ENCODE measurements at regions of chr13 and their contacts with region 1.

Region 1: DNA sequence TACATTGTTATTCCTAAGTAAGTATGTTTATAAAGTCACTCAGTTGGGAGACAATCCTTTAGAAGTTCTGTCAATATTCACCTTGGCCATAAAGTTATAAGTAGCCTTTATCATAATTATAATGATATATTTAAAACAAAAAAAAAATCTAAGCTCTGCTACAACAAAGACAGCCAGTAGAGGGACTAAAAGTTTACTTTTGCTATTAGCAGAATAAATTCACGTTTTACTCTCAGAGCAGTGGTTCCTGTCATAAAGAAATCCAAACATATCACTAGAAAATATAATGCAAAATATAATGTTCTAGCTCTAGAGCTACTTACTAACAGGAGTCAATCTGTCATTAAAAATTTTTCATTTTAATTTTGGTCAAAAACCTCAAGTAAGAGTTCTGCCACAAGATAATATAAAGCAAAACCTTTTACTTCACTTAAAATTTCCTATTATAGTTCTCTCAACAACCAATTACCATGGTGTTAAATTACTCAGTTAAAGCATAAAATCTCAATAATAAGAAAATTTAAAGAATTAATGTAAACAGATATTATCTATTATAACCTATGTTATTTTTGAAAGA is 17.7 kb downstream of the INTS6 start:
- DNase-seq: no peak
- H3K4me3 ChIP-seq: no peak overlapping the region
- H3K27ac ChIP-seq: no peak overlapping the region
- H3K27me3 ChIP-seq: no peaks in the 10 kb centered on the region
- CTCF ChIP-seq: peak; percentile 68

Region 2: GRCh38 chr13:51311957-51312520 is 123.1 kb before region 1 on chr13:
- CTCF ChIA-PET with region 1: no interaction called
- POLR2A ChIA-PET with region 1: no interaction called
- DNase-seq: no peak
- H3K4me3 ChIP-seq: no peak overlapping the region
- H3K27ac ChIP-seq: no peak overlapping the region
- H3K27me3 ChIP-seq: peaks cover 3% of the 10 kb centered on the region
- CTCF ChIP-seq: no peak

Region 3: GRCh38 chr13:51420681-51421490 is 14.2 kb before region 1 on chr13:
- CTCF ChIA-PET with region 1: interaction called, 12 read pairs
- POLR2A ChIA-PET with region 1: no interaction called
- DNase-seq: no peak
- H3K4me3 ChIP-seq: no peak overlapping the region
- H3K27ac ChIP-seq: no peak overlapping the region
- H3K27me3 ChIP-seq: no peaks in the 10 kb centered on the region
- CTCF ChIP-seq: no peak

Region 4: DNA sequence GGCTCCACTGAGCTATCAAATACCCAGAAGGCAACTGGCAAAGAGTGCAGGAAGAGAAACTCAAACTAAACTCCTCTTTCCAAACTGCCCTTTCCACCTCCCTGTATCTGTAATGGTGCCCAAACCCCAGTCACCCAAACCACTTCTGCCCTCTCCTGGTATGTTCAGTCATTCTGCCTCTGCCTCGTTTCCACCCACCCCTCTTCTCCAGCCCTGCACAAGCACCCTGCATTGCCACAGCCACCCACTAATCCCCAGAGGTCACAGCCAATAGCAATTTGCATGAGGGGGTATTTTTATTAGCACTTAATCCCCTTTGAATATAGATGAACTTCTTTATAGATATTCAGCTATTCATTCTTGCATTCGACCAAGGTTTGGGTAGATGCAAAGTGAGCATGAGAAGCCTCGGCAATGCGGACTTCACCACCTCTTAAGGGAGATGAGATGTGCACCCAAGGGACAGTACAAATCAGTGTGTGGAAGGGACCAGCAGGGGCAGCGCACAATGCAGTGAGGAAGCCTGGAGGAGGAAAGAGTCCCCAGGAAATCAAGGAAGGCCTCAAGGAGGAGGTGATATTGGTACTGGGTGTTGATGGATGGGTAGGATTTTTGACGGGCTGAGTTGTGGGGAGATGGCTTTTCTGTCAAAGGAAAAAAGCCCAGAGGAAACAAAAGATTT is 397.5 kb after region 1 on chr13:
- CTCF ChIA-PET with region 1: interaction called, 16 read pairs
- POLR2A ChIA-PET with region 1: no interaction called
- DNase-seq: no peak
- H3K4me3 ChIP-seq: no peak overlapping the region
- H3K27ac ChIP-seq: no peak overlapping the region
- H3K27me3 ChIP-seq: peaks cover 36% of the 10 kb centered on the region
- CTCF ChIP-seq: peak; percentile 33